ENCODE measurements at regions of chr5 and their contacts with region 1.

Region 1: DNA sequence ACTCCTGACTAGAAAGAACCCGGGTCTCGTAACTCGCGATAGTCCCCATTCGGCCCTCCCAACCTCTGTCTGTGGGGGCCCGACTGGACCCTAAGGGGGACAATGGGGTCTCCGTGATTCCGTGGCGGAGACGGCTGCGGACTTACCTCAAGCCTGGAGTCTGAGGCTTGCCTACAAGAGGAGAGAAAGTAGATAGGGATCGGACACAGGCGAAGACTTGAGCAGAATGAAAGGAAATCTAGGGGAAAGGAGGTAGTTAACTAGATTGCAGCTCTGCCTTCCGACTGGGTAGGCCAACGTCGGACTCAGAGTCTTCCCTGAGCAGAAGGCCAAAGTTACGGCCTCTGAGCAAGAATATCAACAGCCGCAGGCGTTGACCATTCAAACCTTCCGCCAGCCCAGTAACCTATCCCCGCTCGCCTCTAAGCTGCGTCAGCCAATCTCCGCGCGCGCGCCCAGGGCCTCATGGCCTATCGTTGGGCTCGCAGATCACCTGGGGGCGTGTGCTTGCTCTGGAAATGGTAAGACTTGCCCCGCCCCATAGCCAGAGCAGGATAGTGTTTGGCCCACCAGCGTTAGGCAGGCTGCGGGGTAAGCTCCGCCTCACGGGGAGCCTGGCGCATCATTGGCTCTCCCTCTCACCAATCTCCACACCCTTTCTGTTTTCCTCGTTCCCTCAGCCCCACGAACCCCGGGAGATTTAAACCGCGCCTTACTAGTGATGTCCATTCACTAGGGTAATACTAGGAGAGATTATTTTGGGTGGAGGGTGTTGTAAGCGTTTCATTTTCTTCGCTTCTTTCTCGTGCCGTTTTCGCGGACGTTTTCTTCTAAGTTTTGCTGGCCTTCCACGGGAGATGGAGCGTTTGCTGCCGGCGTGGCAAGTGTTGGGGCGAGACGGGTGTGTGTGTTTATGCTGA is at the start of gene CDC25C:
- DNase-seq: peak; percentile 92 to 99 (median 95)
- ATAC-seq: peak; percentile 99
- H3K4me3 ChIP-seq: peak within 1 kb of the TSS; percentile 68
- H3K4me3 Mint-ChIP-seq: peak within 1 kb of the TSS; percentile 83
- H3K27ac ChIP-seq: no peak within 1 kb of the TSS
- H3K27ac Mint-ChIP-seq: peak within 1 kb of the TSS; percentile 40
- H3K4me1 ChIP-seq: peaks cover 13% of the 10 kb centered on the region
- H3K4me1 Mint-ChIP-seq: peaks cover 8% of the 10 kb centered on the region
- H3K27me3 ChIP-seq: no peaks in the 10 kb centered on the region
- H3K27me3 Mint-ChIP-seq: no peaks in the 10 kb centered on the region
- CTCF ChIP-seq: no peak
- total RNA-seq, gene CDC25C: not detected

Region 2: GRCh38 chr5:138178516-138179276 is 153.0 kb before region 1 on chr5 and contains the starts of genes BRD8 and KIF20A:
- CTCF ChIA-PET with region 1: no interaction called
- POLR2A ChIA-PET with region 1: interaction called, 4 read pairs
- intact Hi-C with region 1: loop called in 1 of 2 experiments (anchors 2 kb)
- DNase-seq: peak; percentile 77 to 94 (median 85)
- ATAC-seq: peak; percentile 86
- H3K4me3 ChIP-seq: peak within 1 kb of the TSS; percentile 94
- H3K4me3 Mint-ChIP-seq: no peak within 1 kb of the TSS
- H3K27ac ChIP-seq: peak within 1 kb of the TSS; percentile 55 to 76
- H3K27ac Mint-ChIP-seq: no peak within 1 kb of the TSS
- H3K4me1 ChIP-seq: peaks cover 27% of the 10 kb centered on the region
- H3K4me1 Mint-ChIP-seq: peaks cover 11% of the 10 kb centered on the region
- H3K27me3 ChIP-seq: no peaks in the 10 kb centered on the region
- H3K27me3 Mint-ChIP-seq: no peaks in the 10 kb centered on the region
- CTCF ChIP-seq: no peak
- total RNA-seq, gene BRD8: 6.9 to 9.6 TPM
- total RNA-seq, gene KIF20A: not detected

Region 3: DNA sequence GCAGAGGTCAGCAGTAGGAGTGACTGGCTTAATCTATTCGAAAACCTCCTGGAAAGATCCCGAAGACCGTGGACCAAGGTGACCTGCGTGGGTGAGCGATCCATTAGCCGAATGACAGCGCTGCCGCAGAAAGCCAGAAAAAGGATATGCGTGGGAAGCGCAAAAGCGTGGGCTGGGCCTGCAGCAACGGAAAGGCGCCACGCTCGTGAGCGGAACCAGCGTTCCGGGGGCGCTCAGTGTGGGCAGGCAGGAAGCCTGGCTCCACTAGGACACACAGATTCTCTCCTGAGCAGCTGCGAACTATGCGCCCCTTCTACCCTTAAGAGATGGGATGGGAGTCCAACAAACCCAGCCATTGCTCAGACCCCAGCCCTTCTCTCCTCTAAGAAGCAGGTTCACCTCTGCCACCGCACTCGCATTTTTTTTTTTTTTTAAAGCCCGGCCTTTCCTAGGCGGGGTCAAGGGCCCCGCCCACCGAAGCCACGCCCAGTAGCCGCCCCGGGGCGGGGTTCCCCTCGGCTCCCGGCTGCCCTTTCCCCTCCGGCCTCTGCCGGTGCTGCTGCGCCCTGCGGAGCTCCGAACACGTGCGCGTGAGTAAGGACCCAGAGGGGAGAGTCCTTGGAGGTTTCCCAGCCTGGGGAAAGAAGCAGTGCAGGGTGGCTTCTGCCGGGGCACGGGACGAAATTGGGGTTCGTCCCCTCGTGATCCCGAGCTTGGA is 942.0 kb after region 1 on chr5:
- CTCF ChIA-PET with region 1: no interaction called
- POLR2A ChIA-PET with region 1: no interaction called
- intact Hi-C with region 1: loop called in 1 of 2 experiments (anchors 10 kb)
- DNase-seq: peak; percentile 69 to 93 (median 78)
- ATAC-seq: peak; percentile 86
- H3K4me3 ChIP-seq: peak overlapping the region; percentile 77
- H3K4me3 Mint-ChIP-seq: peak overlapping the region; percentile 78
- H3K27ac ChIP-seq: peak overlapping the region; percentile 38 to 47
- H3K27ac Mint-ChIP-seq: peak overlapping the region; percentile 67
- H3K4me1 ChIP-seq: peaks cover 46% of the 10 kb centered on the region
- H3K4me1 Mint-ChIP-seq: peaks cover 50% of the 10 kb centered on the region
- H3K27me3 ChIP-seq: no peaks in the 10 kb centered on the region
- H3K27me3 Mint-ChIP-seq: no peaks in the 10 kb centered on the region
- CTCF ChIP-seq: no peak